ENCODE measurements at regions of chr11 and their contacts with region 1.

Region 1: GRCh38 chr11:76919887-76920746 is 59.4 kb downstream of the ACER3 start:
- DNase-seq: peak; percentile 58
- H3K4me3 Mint-ChIP-seq: no peak overlapping the region
- H3K27ac Mint-ChIP-seq: no peak overlapping the region
- H3K4me1 Mint-ChIP-seq: peaks cover 12% of the 10 kb centered on the region
- H3K27me3 Mint-ChIP-seq: no peaks in the 10 kb centered on the region

Region 2: DNA sequence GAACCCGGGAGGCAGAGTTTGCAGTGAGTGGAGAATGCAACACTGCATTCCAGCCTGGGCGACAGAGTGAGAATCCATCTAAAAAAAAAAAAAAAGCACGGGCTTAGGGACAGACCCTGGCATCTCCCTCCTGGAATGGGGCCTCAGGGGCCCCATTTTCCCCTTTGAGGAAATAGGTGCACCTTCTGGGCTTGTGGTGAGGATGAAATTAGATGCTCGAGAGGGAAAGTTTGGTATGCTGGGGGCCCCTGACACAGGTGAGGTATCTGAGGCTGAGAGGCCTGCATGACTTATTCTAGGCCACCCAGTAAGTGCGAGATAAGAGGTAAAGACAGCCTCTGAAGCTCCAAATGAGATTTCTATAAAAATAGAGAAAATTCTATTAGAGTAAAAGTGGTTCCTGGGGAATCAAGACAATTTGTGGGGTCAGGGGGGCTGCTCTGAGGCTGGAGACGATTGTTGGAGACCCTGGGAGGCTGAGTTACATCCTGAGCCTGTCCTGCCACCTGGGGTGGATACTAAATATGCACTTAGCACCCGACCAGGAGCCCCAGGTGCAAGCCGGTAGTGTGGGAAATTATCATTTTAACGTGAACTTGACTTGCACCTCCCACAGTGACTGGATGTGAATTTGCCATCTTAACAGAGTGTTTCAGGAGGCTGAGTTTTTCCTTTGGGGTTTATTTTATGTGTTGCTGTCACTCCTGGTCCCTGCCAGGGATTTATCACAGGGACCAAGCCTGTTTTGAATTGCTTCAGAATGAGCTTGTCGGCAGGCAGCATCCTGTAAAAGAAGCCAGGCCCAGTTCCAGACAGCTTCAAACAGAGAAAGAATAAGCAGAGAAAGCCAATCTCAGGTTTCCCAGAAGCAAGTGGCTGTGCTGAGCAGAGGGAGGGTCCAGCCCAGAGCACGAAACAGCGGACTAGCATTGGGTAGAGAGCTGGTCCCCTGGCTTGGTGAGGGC is 185.4 kb before region 1 on chr11:
- CTCF ChIA-PET with region 1: interaction called, 27 read pairs
- POLR2A ChIA-PET with region 1: no interaction called
- DNase-seq: no peak
- H3K4me3 Mint-ChIP-seq: no peak overlapping the region
- H3K27ac Mint-ChIP-seq: no peak overlapping the region
- H3K4me1 Mint-ChIP-seq: peaks cover 4% of the 10 kb centered on the region
- H3K27me3 Mint-ChIP-seq: peaks cover 15% of the 10 kb centered on the region

Region 3: GRCh38 chr11:76762867-76763572 is 157.1 kb before region 1 on chr11:
- CTCF ChIA-PET with region 1: no interaction called
- POLR2A ChIA-PET with region 1: no interaction called
- DNase-seq: no peak
- H3K4me3 Mint-ChIP-seq: no peak overlapping the region
- H3K27ac Mint-ChIP-seq: no peak overlapping the region
- H3K4me1 Mint-ChIP-seq: peaks cover 15% of the 10 kb centered on the region
- H3K27me3 Mint-ChIP-seq: peaks cover 5% of the 10 kb centered on the region

Region 4: GRCh38 chr11:76850815-76851214 is 69.3 kb before region 1 on chr11:
- CTCF ChIA-PET with region 1: interaction called, 10 read pairs
- POLR2A ChIA-PET with region 1: no interaction called
- DNase-seq: no peak
- H3K4me3 Mint-ChIP-seq: no peak overlapping the region
- H3K27ac Mint-ChIP-seq: no peak overlapping the region
- H3K4me1 Mint-ChIP-seq: no peaks in the 10 kb centered on the region
- H3K27me3 Mint-ChIP-seq: peaks cover 16% of the 10 kb centered on the region

Region 5: DNA sequence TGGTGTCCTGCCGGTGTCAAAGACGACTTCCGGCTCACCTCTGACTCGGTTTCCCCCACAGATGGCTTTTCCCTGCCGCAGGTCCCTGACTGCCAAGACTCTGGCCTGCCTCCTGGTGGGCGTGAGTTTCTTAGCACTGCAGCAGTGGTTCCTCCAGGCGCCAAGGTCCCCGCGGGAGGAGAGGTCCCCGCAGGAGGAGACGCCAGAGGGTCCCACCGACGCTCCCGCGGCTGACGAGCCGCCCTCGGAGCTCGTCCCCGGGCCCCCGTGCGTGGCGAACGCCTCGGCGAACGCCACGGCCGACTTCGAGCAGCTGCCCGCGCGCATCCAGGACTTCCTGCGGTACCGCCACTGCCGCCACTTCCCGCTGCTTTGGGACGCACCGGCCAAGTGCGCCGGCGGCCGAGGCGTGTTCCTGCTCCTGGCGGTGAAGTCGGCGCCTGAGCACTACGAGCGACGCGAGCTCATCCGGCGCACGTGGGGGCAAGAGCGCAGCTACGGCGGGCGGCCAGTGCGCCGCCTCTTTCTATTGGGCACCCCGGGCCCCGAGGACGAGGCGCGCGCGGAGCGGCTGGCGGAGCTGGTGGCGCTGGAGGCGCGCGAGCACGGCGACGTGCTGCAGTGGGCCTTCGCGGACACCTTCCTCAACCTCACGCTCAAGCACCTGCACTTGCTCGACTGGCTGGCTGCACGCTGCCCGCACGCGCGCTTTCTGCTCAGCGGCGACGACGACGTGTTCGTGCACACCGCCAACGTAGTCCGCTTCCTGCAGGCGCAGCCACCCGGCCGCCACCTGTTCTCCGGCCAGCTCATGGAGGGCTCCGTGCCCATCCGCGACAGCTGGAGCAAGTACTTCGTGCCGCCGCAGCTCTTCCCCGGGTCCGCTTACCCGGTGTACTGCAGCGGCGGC is 119.6 kb after region 1 on chr11:
- CTCF ChIA-PET with region 1: interaction called, 12 read pairs
- POLR2A ChIA-PET with region 1: no interaction called
- DNase-seq: no peak
- H3K4me3 Mint-ChIP-seq: no peak overlapping the region
- H3K27ac Mint-ChIP-seq: no peak overlapping the region
- H3K4me1 Mint-ChIP-seq: peaks cover 10% of the 10 kb centered on the region
- H3K27me3 Mint-ChIP-seq: peaks cover 56% of the 10 kb centered on the region

Region 6: DNA sequence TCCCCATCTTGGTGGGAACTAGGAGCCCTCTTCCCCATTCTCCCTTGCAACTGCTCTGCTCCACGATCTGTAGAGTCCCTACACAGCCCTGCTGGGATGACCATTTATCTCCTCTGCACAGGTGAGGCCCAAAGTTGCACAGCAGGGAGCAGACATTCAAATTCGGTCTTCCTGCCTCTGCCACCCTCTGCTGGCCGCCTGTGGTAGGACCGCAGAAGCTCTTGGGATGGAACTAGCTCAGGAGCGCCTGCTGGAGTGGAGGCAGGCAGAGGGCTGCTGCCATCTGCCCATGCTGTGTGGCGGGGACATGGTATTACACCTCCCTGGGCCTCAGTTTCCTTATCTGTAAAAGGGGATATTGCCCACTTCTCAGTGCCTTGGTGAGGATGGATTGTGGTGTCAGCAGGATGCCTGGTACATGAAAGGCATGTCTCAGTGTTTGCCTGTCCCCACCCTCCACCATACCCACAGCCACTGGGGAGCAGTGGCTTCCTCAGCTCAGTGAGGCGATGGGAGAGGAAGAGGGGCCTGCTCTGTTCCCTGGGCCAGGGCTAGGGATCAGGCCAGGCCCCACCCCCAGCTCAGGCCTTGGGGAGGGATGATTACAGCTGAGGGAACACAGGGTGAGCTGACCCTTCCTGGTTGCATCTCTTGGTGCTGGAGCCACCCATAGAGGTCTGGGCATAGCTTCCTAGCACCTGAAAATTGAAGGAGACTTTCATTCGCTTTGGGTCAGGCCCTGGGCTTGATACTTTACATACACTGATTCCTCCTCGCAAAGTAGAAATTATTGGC is 171.2 kb after region 1 on chr11:
- CTCF ChIA-PET with region 1: interaction called, 27 read pairs
- POLR2A ChIA-PET with region 1: no interaction called
- DNase-seq: peak; percentile 80
- H3K4me3 Mint-ChIP-seq: no peak overlapping the region
- H3K27ac Mint-ChIP-seq: no peak overlapping the region
- H3K4me1 Mint-ChIP-seq: peaks cover 6% of the 10 kb centered on the region
- H3K27me3 Mint-ChIP-seq: no peaks in the 10 kb centered on the region

Measured in activated CD4-positive, alpha-beta memory T cell treated with anti-CD3 and anti-CD28 coated beads, Interleukin-2, amount 10 ng/mL, durations not matched to agents 7 days and 5 days (primary cell).